CD4-positive, alpha-beta T cell (primary cell): ENCODE measurements at regions of chrX and their contacts with region 1.

Region 1: DNA sequence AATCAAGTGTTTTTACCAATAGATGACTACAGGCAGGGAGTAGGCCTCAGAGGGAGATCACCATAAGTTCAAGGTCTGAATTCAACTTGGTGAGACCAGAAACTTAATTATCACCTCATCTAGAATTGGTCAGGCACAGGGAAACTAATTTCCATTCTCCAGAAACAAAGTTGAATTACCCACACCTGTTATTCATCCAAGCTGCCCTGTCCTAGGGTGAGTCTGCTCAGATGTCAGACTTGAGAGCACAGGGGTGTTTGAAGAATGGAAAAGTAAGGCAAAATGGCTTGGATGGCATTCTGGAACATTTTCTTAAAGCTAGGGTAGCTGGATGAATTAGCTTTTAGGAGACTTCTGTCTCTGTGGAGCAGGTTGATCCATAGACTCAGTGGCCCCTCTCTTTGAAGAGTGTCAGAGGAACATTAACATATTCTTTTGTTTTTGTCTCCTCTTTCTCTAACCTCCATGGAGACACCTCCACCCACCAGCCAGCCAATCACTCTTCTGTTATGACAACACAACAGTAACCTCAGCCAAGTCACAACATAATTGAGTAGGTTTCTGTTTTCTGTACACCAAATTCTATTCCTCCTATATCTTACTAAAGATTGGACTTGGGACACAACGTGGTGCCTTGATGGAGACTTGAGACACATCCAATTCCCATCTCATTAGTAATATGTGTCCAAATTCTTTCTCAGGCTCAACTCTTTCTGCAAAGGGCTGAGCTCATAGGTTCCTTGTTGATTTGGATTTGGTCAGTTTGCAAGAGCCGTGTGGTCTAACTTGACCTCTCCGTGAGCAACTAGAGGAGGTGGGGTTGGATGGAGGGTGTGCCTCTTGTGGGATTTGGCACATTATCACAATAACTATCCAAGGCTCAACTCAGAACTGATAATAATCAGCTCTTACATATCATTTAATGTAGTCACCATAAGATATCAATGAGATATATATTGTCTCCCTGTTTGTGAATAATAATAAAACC is 45.1 kb downstream of the VSIG4 start:
- DNase-seq: no peak
- ATAC-seq: no peak
- H3K4me3 ChIP-seq: no peak overlapping the region
- H3K4me3 Mint-ChIP-seq: no peak overlapping the region
- H3K27ac ChIP-seq: no peak overlapping the region
- H3K27ac Mint-ChIP-seq: no peak overlapping the region
- H3K4me1 ChIP-seq: peaks cover 7% of the 10 kb centered on the region
- H3K4me1 Mint-ChIP-seq: peaks cover 31% of the 10 kb centered on the region
- H3K27me3 ChIP-seq: no peaks in the 10 kb centered on the region
- H3K27me3 Mint-ChIP-seq: no peaks in the 10 kb centered on the region
- CTCF ChIP-seq: no peak

Region 2: DNA sequence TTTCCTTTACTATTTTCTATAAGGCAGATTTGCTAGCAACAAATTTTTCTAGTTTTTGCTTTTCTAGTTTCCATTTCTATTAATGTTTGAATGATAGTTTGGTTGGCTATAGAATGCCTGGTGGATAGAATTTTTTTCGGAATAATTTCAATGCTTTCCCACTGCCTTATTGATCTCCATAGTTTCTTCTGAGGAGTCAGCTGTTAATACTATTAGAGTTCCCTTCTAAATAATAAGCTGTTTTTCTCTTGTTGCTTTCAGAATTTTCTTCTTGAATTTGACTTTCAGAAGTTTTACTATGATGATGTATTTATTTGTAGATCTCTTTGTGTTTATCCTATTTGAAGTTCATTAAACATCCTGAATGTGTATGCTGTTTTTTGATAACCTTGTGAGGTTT is 46.7 kb before region 1 on chrX:
- CTCF ChIA-PET with region 1: no interaction called
- POLR2A ChIA-PET with region 1: no interaction called
- intact Hi-C with region 1: loop called in 1 of 2 experiments (anchors 1 kb)
- DNase-seq: no peak
- ATAC-seq: no peak
- H3K4me3 ChIP-seq: no peak overlapping the region
- H3K4me3 Mint-ChIP-seq: no peak overlapping the region
- H3K27ac ChIP-seq: no peak overlapping the region
- H3K27ac Mint-ChIP-seq: no peak overlapping the region
- H3K4me1 ChIP-seq: no peaks in the 10 kb centered on the region
- H3K4me1 Mint-ChIP-seq: peaks cover 26% of the 10 kb centered on the region
- H3K27me3 ChIP-seq: no peaks in the 10 kb centered on the region
- H3K27me3 Mint-ChIP-seq: no peaks in the 10 kb centered on the region
- CTCF ChIP-seq: no peak